ENCODE measurements at regions of chrX and their contacts with region 1.

Region 1: DNA sequence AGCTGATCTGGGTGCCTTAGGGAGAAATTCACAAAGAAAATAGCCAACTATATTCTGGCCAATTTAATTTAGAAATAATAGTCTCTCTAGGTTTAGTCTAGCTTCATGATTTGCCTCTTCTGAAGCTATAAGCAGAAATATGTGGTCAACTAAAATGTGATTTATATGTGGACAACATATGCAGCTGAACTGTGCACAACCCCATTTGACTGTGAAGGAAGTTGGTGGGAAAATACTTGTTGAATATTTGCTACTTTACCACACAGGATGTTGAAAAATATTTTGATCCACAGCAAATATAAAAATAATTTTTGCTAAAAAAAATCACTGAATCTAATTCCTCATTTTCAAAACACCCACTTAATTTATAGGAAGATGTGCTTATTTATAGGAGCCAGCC is 15.7 kb upstream of the RNF128 start:
- DNase-seq: no peak
- H3K4me3 ChIP-seq: no peak overlapping the region
- H3K27ac ChIP-seq: no peak overlapping the region
- H3K27me3 ChIP-seq: no peaks in the 10 kb centered on the region
- CTCF ChIP-seq: no peak

Region 2: GRCh38 chrX:106619797-106620196 is 91.0 kb before region 1 on chrX:
- CTCF ChIA-PET with region 1: interaction called, 11 read pairs
- POLR2A ChIA-PET with region 1: no interaction called
- DNase-seq: no peak
- H3K4me3 ChIP-seq: no peak overlapping the region
- H3K27ac ChIP-seq: no peak overlapping the region
- H3K27me3 ChIP-seq: no peaks in the 10 kb centered on the region
- CTCF ChIP-seq: peak; percentile 45